RWPE1 (cell line): ENCODE measurements at regions of chr21 and their contacts with region 1.

Region 1: DNA sequence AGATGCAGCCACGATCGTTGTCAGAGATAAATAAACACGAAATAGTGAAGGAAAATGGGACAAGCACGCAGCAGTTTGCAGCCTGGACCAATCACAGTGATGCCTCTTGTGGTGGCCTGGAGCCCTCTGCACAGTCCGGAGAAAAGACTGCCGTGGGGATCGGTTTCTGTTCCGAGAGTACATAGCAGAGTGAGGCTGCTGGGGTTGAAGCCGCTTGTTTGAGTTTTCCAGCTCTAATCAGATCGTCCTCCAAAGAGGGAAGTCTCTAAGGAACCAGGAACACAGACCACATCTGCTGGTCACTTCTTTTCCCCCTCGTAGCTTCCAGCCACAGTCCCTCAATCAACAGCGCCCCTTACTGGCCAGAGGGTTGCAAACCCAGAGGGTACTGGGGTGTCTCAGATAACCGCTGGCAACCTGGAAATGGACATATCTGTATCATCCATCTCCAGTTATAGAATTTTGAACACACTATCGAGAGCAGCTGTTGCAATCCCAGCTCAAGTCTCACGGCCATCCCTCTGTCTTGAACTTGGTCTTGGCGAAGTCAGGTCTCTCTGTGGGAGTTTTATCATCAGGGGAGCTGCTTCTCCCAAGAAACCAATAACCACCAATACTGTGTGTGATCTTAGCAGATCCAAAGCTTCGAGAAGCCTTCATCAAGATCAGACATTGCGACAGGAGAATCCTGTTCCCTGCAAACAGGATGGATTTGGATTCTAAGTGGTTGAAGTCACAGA is 57.4 kb downstream of the OLIG1 start:
- DNase-seq: peak; percentile 54
- H3K27ac ChIP-seq: no peak overlapping the region
- CTCF ChIP-seq: peak; percentile 36; the same call in 1 of the 2 replicates

Region 2: GRCh38 chr21:32940079-32941014 is 187.0 kb before region 1 on chr21:
- CTCF ChIA-PET with region 1: interaction called, 11 read pairs
- POLR2A ChIA-PET with region 1: no interaction called
- DNase-seq: peak; percentile 44
- H3K27ac ChIP-seq: no peak overlapping the region
- CTCF ChIP-seq: peak; percentile 78